ENCODE measurements at regions of chr1 and their contacts with region 1.

Region 1: DNA sequence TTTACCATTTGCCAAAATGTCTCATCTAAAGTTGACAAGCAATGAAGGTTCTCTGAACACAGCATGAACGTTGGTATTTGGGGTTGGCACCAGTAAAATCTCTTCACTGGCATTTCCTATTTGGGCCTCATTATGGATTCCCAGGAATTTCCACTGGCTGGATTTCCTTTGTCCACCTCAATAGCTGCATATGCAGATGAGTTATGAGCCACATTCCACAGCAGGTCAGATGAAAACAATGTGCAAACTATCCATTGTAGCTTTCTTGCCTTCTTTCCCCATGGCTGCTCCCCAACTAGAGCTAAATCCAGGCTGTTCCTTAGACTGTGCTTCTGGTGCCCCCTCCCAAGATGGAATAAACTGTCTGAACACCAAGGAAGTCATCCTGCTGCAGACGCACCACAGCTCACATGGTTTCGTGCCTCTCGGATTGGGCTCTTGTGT is 168.1 kb upstream of the FGGY start:
- DNase-seq: no peak
- H3K4me3 Mint-ChIP-seq: no peak overlapping the region
- H3K27ac Mint-ChIP-seq: no peak overlapping the region
- H3K4me1 Mint-ChIP-seq: peaks cover 42% of the 10 kb centered on the region
- H3K27me3 Mint-ChIP-seq: peaks cover 5% of the 10 kb centered on the region

Region 2: DNA sequence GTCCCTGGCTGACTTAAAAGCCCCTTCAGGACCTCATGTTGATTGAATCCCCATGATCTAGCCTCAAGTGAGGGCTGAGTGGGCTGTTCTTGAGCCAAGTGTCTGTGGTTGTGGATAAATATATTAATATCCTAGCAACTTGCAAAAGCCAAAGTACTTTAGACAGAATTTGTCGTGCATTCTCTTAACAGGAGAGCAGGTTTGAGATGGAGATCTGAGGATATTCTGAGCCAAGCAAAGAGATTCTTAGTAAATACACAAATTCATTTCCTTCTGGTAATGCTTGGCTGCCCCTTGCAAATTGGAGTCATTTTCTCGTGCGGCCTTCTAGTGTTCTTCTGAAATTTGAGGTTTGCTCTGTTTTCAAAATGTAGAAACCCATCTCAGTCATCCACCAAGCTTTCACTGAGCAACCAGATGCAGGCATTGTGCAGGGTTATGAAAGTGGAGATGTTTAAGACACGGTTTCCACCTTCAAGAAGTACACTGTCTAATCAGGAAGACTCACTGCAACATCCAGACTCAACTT is 102.8 kb before region 1 on chr1:
- intact Hi-C with region 1: loop called (anchors 5 kb)
- DNase-seq: no peak
- H3K4me3 Mint-ChIP-seq: no peak overlapping the region
- H3K27ac Mint-ChIP-seq: no peak overlapping the region
- H3K4me1 Mint-ChIP-seq: peaks cover 17% of the 10 kb centered on the region
- H3K27me3 Mint-ChIP-seq: no peaks in the 10 kb centered on the region